Activated CD4-positive, alpha-beta memory T cell treated with anti-CD3 and anti-CD28 coated beads for 36 hours (primary cell): ENCODE measurements at regions of chr1 and their contacts with region 1.

Region 1: GRCh38 chr1:91754348-91754747 is 131.6 kb downstream of the TGFBR3 start:
- DNase-seq: peak; percentile 77
- H3K4me3 Mint-ChIP-seq: peak overlapping the region; percentile 2
- H3K27ac Mint-ChIP-seq: peak overlapping the region; percentile 67
- H3K4me1 Mint-ChIP-seq: peaks cover 38% of the 10 kb centered on the region
- H3K27me3 Mint-ChIP-seq: peaks cover 1% of the 10 kb centered on the region

Region 2: DNA sequence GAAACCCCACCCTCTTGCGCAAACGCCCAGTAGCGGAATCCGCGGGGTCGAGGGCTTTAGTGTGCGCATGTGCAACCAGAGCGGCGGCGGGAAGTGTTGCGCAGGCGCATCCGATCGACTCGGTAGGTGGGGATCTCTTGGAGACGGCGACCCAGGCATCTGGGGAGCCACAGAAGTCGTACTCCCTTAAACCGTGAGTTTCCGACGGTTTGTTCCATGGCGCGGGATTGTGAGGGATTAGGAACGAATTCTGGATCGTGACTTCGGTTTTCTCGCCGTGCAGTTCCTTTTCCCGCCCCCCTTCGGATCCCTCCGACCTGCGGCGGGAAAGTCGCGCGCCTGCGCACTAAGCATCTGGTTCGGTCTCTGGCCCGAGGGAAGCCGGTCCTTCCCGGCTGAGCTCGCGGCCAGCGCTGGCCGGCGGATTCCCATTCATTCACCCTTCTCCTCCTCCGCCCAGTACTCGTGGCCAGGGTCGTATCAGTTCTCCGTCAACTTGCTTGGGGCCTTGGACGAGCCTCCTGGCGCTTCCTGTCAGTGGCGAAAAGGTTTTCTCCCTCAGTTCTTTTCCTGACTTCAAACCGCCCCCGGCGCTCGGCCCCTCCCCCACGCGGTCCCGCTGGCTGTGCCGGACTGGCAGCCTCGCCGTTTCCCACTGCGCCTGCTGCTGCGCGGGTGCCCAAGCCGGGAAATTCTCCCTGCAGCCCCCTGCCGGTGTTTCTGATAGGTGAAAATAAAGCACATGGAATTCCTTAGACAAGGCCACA is 253.4 kb before region 1 on chr1 and contains the start of gene CDC7:
- CTCF ChIA-PET with region 1: no interaction called
- POLR2A ChIA-PET with region 1: no interaction called
- intact Hi-C with region 1: loop called (anchors 2 kb)
- DNase-seq: peak; percentile 88
- H3K4me3 Mint-ChIP-seq: no peak within 1 kb of the TSS
- H3K27ac Mint-ChIP-seq: no peak within 1 kb of the TSS
- H3K4me1 Mint-ChIP-seq: peaks cover 16% of the 10 kb centered on the region
- H3K27me3 Mint-ChIP-seq: no peaks in the 10 kb centered on the region
- total RNA-seq, gene CDC7: 20.2 to 20.4 TPM

Region 3: DNA sequence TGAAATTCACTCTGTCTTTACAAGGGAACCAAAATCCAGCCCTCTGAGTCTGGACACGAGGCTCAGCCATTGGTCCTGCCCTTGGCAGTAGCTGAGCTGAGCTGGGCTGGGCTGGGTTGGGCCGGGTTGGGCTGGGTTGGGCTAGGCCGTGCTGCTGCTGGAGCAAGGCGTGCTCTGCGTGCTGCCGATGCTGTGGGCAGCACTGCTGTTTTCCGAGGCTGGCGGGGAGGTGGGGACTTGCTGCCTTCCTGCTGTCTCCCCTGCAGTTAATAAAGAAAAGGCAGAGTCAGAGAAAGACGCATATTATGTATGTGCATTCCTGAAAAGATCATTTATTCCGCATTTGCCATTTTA is 70.8 kb before region 1 on chr1:
- CTCF ChIA-PET with region 1: no interaction called
- POLR2A ChIA-PET with region 1: no interaction called
- intact Hi-C with region 1: no loop called
- DNase-seq: no peak
- H3K4me3 Mint-ChIP-seq: no peak overlapping the region
- H3K27ac Mint-ChIP-seq: no peak overlapping the region
- H3K4me1 Mint-ChIP-seq: peaks cover 19% of the 10 kb centered on the region
- H3K27me3 Mint-ChIP-seq: no peaks in the 10 kb centered on the region

Region 4: GRCh38 chr1:91697416-91697815 is 56.9 kb before region 1 on chr1:
- CTCF ChIA-PET with region 1: no interaction called
- POLR2A ChIA-PET with region 1: no interaction called
- intact Hi-C with region 1: loop called (anchors 1 kb)
- DNase-seq: peak; percentile 77
- H3K4me3 Mint-ChIP-seq: peak overlapping the region; percentile 48
- H3K27ac Mint-ChIP-seq: peak overlapping the region; percentile 54
- H3K4me1 Mint-ChIP-seq: peaks cover 31% of the 10 kb centered on the region
- H3K27me3 Mint-ChIP-seq: no peaks in the 10 kb centered on the region

Region 5: GRCh38 chr1:91732291-91733107 is 21.8 kb before region 1 on chr1:
- CTCF ChIA-PET with region 1: interaction called, 4 read pairs
- POLR2A ChIA-PET with region 1: interaction called, 16 read pairs
- intact Hi-C with region 1: loop called (anchors 1 kb)
- DNase-seq: peak; percentile 65
- H3K4me3 Mint-ChIP-seq: peak overlapping the region; percentile 24
- H3K27ac Mint-ChIP-seq: peak overlapping the region; percentile 29
- H3K4me1 Mint-ChIP-seq: peaks cover 50% of the 10 kb centered on the region
- H3K27me3 Mint-ChIP-seq: no peaks in the 10 kb centered on the region

Region 6: GRCh38 chr1:92583821-92584760 is 829.7 kb after region 1 on chr1:
- CTCF ChIA-PET with region 1: no interaction called
- POLR2A ChIA-PET with region 1: no interaction called
- intact Hi-C with region 1: loop called (anchors 5 kb)
- DNase-seq: no peak
- H3K4me3 Mint-ChIP-seq: peak overlapping the region; percentile 65
- H3K27ac Mint-ChIP-seq: peak overlapping the region; percentile 92
- H3K4me1 Mint-ChIP-seq: peaks cover 64% of the 10 kb centered on the region
- H3K27me3 Mint-ChIP-seq: no peaks in the 10 kb centered on the region